IMR-90 (cell line): ENCODE measurements at regions of chr7 and their contacts with region 1.

Region 1: DNA sequence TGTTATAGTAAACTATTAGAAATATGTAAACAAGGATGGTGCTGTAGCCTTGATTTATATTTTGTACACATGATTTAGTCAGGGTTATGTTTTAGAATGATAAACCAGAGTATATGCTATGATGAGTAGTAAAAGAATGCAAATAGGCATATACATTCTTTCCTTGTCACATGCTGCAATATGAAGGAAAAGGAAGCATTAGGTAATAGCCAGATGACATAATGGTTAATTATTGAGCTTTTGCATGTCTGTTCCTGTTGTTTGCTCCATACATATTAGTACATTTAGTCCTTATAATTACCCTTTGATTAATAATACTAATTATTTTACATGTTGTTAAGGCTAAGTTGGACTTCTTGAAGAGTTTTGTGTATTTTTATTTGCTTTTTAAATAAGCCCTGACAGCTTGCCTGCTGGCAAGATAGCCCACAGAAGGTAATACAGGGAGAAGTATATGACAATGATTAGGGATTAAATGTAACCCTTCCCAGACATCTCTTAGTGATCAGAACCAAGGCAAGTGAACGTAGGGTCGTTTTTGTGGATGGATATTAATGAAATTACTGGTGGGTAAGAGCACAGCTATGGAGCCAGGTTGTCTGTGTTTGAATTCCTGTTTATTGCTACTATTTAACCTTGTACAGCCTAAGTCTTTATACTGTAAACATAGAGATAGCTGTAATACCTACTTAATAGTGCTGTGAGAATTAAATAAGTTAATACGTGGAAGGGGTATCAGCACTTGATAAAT is 68.4 kb downstream of the PHTF2 start:
- DNase-seq: peak; percentile 87
- ATAC-seq: peak; percentile 88
- H3K4me3 ChIP-seq: no peak overlapping the region
- H3K27ac ChIP-seq: peak overlapping the region; percentile 50
- H3K4me1 ChIP-seq: peaks cover 5% of the 10 kb centered on the region
- H3K27me3 ChIP-seq: no peaks in the 10 kb centered on the region
- CTCF ChIP-seq: no peak
- POLR2A ChIP-seq: no peak
- RAD21 ChIP-seq: no peak

Region 2: DNA sequence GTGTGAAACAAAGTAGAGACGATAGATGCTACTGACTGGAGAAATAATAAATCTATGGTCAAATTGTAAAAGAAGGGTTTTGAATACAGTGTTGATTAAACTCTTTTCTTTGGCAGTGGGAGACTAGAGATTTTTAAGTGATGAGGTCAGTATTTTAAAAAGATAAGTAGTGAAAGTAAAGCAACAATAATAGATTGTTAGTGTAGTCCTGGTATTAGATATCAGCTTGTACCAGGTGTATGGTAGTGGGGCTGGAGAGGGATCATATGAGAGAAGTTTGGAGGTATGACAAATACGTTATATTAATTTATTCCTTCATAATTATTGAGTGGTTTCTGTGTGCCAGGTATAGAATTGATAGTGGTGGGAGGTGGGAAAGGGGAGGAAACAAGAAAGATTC is 43.2 kb before region 1 on chr7:
- CTCF ChIA-PET with region 1: no interaction called
- POLR2A ChIA-PET with region 1: no interaction called
- dilution Hi-C with region 1: no loop called
- in situ Hi-C with region 1: no loop called
- intact Hi-C with region 1: no loop called
- DNase-seq: no peak
- ATAC-seq: no peak
- H3K4me3 ChIP-seq: no peak overlapping the region
- H3K27ac ChIP-seq: no peak overlapping the region
- H3K4me1 ChIP-seq: no peaks in the 10 kb centered on the region
- H3K27me3 ChIP-seq: no peaks in the 10 kb centered on the region
- CTCF ChIP-seq: no peak
- POLR2A ChIP-seq: no peak
- RAD21 ChIP-seq: no peak

Region 3: GRCh38 chr7:77846317-77847092 is 20.5 kb before region 1 on chr7:
- CTCF ChIA-PET with region 1: no interaction called
- POLR2A ChIA-PET with region 1: interaction called, 12 read pairs
- dilution Hi-C with region 1: no loop called
- in situ Hi-C with region 1: no loop called
- intact Hi-C with region 1: no loop called
- DNase-seq: no peak
- ATAC-seq: no peak
- H3K4me3 ChIP-seq: no peak overlapping the region
- H3K27ac ChIP-seq: no peak overlapping the region
- H3K4me1 ChIP-seq: no peaks in the 10 kb centered on the region
- H3K27me3 ChIP-seq: no peaks in the 10 kb centered on the region
- CTCF ChIP-seq: no peak
- POLR2A ChIP-seq: no peak
- RAD21 ChIP-seq: no peak

Region 4: DNA sequence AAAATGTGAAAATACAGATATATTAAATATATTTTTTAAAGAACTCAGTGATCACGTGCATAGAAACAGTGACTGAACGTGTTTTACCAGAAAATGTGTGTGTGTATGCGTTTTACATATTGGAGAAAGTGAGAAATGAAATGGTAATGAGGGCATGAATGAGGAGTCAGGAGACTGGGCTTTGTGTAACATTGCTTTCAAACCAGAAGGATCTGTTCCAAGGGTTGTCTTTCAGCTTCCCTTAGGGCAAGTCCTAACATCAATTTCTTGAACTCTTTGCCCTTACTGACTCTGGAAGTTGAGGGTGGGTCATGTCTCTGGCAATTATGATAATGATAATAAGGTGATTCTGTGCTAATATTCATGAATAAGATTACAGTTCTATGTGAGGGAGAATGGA is 488.9 kb after region 1 on chr7:
- CTCF ChIA-PET with region 1: no interaction called
- POLR2A ChIA-PET with region 1: no interaction called
- dilution Hi-C with region 1: no loop called
- in situ Hi-C with region 1: no loop called
- intact Hi-C with region 1: no loop called
- DNase-seq: no peak
- ATAC-seq: no peak
- H3K4me3 ChIP-seq: no peak overlapping the region
- H3K27ac ChIP-seq: no peak overlapping the region
- H3K4me1 ChIP-seq: no peaks in the 10 kb centered on the region
- H3K27me3 ChIP-seq: no peaks in the 10 kb centered on the region
- CTCF ChIP-seq: no peak
- POLR2A ChIP-seq: no peak
- RAD21 ChIP-seq: no peak